ENCODE measurements at regions of chr5 and their contacts with region 1.

Region 1: GRCh38 chr5:113378959-113379541 is 55.7 kb downstream of the TSSK1B start:
- DNase-seq: peak; percentile 59
- H3K4me3 ChIP-seq: no peak overlapping the region
- H3K27ac ChIP-seq: no peak overlapping the region
- H3K4me1 ChIP-seq: no peaks in the 10 kb centered on the region
- H3K27me3 ChIP-seq: no peaks in the 10 kb centered on the region
- CTCF ChIP-seq: peak; percentile 53

Region 2: GRCh38 chr5:113513384-113514288 is 134.6 kb after region 1 on chr5 and contains the start of gene YTHDC2:
- intact Hi-C with region 1: loop called (anchors 5 kb)
- DNase-seq: peak; percentile 83
- H3K4me3 ChIP-seq: peak within 1 kb of the TSS; percentile 96
- H3K27ac ChIP-seq: peak within 1 kb of the TSS; percentile 82
- H3K4me1 ChIP-seq: no peaks in the 10 kb centered on the region
- H3K27me3 ChIP-seq: no peaks in the 10 kb centered on the region
- CTCF ChIP-seq: no peak
- total RNA-seq, gene YTHDC2: 22.6 to 22.8 TPM

Region 3: GRCh38 chr5:113606298-113607134 is 227.5 kb after region 1 on chr5:
- intact Hi-C with region 1: loop called (anchors 5 kb)
- DNase-seq: peak; percentile 33
- H3K4me3 ChIP-seq: no peak overlapping the region
- H3K27ac ChIP-seq: no peak overlapping the region
- H3K4me1 ChIP-seq: no peaks in the 10 kb centered on the region
- H3K27me3 ChIP-seq: no peaks in the 10 kb centered on the region
- CTCF ChIP-seq: peak; percentile 52

Measured in colonic mucosa (tissue), 4 donors.